PC-3 (cell line): ENCODE measurements at regions of chr5 and their contacts with region 1.

Region 1: GRCh38 chr5:12557012-12557411 is 652.8 kb upstream of the CTNND2 start:
- DNase-seq: peak; percentile 57
- ATAC-seq: peak; percentile 97
- H3K4me3 ChIP-seq: no peak overlapping the region
- H3K27ac ChIP-seq: no peak overlapping the region
- H3K4me1 ChIP-seq: peaks cover 4% of the 10 kb centered on the region; the same call in 1 of the 2 replicates
- H3K27me3 ChIP-seq: no peaks in the 10 kb centered on the region
- CTCF ChIP-seq: no peak

Region 2: DNA sequence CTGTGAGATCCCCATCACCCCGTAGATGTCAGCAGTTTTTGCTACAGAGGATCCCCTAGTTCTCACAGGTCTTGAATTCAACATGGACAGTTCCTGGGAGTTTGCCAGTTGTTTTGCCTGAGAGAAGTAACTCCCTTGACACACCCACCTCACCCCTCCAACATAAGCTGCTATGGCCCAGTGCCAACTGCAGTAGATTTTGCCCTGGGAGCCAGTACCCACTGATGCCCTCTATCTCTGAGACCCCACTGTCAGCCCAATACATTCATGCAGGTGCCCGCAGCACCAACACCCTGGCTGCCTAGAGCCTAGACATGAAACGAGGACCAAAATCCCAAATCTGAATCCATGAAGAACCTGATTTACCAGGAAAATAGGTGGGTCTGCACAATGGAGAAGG is 68.9 kb before region 1 on chr5:
- CTCF ChIA-PET with region 1: no interaction called
- POLR2A ChIA-PET with region 1: no interaction called
- intact Hi-C with region 1: no loop called
- DNase-seq: no peak
- ATAC-seq: no peak
- H3K4me3 ChIP-seq: no peak overlapping the region
- H3K27ac ChIP-seq: no peak overlapping the region
- H3K4me1 ChIP-seq: no peaks in the 10 kb centered on the region
- H3K27me3 ChIP-seq: no peaks in the 10 kb centered on the region
- CTCF ChIP-seq: no peak

Region 3: GRCh38 chr5:12691258-12691657 is 134.2 kb after region 1 on chr5:
- CTCF ChIA-PET with region 1: no interaction called
- POLR2A ChIA-PET with region 1: no interaction called
- intact Hi-C with region 1: loop called (anchors 1 kb)
- DNase-seq: peak; percentile 26
- ATAC-seq: no peak
- H3K4me3 ChIP-seq: no peak overlapping the region
- H3K27ac ChIP-seq: no peak overlapping the region
- H3K4me1 ChIP-seq: no peaks in the 10 kb centered on the region
- H3K27me3 ChIP-seq: no peaks in the 10 kb centered on the region
- CTCF ChIP-seq: no peak